ENCODE measurements at regions of chr18 and their contacts with region 1.

Region 1: DNA sequence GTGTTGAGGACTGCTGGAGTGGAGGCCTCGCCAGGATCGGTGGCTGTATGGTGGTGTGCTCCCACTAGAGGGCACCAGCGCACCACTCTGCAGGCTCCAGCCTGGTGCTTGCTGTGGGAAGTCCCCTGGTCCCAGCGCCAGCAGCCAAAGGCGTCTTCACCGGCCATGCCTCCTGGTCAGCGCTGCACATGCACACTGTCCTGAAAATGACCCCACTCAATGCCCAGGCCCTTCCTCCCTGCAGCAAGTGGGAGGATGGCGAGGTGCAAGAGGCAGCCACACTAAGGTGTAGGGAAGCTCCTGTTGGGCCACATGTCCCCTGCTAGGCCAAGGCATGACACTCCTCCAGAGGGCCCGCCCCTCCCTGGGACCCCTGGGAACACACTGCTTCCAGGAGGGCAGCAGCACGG is 136.5 kb downstream of the CTIF start:
- DNase-seq: peak; percentile 78
- ATAC-seq: peak; percentile 98
- H3K4me3 Mint-ChIP-seq: no peak overlapping the region
- H3K27ac Mint-ChIP-seq: no peak overlapping the region
- H3K4me1 Mint-ChIP-seq: peaks cover 3% of the 10 kb centered on the region
- H3K27me3 Mint-ChIP-seq: no peaks in the 10 kb centered on the region
- CTCF ChIP-seq: no peak

Region 2: DNA sequence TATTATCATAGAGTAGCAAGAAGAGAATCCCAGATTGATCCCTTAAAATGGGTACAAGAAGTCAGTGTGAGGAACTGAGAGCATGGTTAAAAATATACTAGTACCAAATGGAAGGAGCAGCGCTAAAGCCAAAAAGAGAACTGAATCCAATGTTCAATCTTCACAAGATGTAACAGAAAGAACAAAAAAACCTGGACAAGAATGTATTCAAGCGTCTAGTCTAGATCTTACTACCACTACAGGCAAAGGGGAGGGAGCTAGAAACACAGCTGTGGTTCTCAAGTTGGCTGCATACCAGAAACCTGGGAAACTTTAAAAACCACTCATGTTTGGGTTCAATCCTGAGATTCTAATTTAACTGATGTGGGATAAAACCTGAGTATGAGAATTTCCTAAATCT is 1815.5 kb before region 1 on chr18:
- CTCF ChIA-PET with region 1: no interaction called
- POLR2A ChIA-PET with region 1: no interaction called
- intact Hi-C with region 1: no loop called
- DNase-seq: no peak
- ATAC-seq: peak; percentile 21
- H3K4me3 Mint-ChIP-seq: peak overlapping the region; percentile 46
- H3K27ac Mint-ChIP-seq: peak overlapping the region; percentile 38
- H3K4me1 Mint-ChIP-seq: peaks cover 26% of the 10 kb centered on the region
- H3K27me3 Mint-ChIP-seq: no peaks in the 10 kb centered on the region
- CTCF ChIP-seq: no peak

Region 3: DNA sequence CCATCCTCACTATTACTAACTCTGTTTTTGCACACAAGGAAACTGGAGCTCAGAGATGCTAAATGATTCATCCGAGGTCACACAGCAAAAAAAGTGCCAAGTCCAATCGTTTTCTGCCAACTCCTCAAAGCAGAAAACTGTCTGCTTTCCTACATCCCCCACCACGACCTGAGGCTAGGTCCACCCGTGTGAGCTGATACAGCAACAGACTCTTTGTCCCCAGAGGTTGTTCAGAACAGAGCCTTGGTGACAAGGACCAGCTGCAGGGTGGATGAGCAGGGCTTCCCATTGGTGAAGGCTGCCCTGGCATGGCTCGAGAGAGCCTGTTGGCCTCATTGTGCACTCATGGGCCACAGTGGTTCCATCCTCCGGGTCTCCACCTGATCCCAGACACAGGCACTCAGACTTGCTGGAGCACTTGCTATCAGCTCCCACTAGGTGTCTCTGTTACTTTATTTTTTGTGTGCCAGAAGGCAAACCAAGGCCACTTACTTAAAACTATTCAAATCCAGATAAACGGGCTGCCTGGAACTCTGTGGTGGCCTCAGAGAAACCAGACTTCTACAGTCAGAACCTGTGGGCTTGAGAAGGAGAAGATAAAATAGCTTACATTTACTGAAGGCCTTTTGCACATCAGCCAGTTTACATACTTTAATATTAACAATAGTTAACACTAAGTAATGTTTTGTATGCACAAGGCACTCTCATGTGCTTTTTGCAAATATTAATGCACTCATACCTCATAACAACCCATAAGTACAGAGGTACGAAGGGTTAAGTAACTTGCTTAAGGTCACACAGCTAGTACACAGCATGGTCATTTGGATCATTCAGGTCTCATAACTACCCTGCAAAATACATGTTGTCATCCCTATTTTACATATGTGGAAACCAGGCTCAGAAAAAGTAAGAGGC is 199.5 kb before region 1 on chr18:
- CTCF ChIA-PET with region 1: no interaction called
- POLR2A ChIA-PET with region 1: no interaction called
- intact Hi-C with region 1: loop called (anchors 1 kb)
- DNase-seq: no peak
- ATAC-seq: peak; percentile 37
- H3K4me3 Mint-ChIP-seq: no peak overlapping the region
- H3K27ac Mint-ChIP-seq: no peak overlapping the region
- H3K4me1 Mint-ChIP-seq: no peaks in the 10 kb centered on the region
- H3K27me3 Mint-ChIP-seq: peaks cover 23% of the 10 kb centered on the region
- CTCF ChIP-seq: peak; percentile 30

Region 4: DNA sequence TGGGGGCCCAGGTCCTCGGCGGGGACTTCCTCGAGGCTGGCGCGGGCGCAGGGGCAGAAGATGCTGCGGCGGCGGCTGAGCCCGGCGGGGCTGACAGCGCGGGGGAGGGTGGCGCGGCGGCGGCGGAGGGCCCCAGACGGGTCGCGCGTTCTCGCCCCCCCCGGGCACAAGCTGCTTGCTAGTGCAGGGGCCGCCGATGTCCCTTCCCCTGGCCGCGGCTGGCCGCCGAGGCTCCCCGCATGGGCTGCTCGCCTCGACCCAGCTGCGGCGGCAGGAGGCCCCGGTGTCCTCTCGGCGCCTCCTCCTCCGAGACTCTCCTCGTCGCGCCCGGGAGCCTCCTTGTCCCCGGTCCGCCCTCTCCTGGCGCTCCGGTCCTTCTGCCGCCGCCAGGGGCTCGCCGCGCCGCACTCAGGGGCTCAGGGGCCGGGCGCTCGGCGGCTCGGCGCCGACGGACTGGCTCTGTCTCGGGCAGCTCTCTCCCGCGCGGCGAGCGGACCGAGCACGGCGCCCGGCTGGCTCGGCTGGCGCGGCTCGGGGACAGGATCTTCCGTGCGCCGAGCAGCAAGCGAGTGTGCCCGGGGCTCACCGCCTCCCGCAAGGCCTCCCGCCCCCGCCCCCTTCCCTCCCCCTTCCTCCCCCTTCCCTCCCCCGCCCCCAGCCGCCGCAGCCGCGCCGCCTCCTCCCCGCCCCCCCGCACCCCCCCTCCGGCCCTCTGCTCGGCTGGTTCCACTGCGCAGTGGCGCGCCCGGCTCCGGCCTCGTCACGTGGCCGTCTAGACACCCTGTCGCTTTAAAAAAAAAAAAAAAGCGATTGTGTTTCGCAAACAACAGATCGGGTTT is 276.3 kb after region 1 on chr18:
- CTCF ChIA-PET with region 1: no interaction called
- POLR2A ChIA-PET with region 1: no interaction called
- intact Hi-C with region 1: loop called (anchors 2 kb)
- DNase-seq: peak; percentile 77
- ATAC-seq: peak; percentile 46
- H3K4me3 Mint-ChIP-seq: peak overlapping the region; percentile 95
- H3K27ac Mint-ChIP-seq: peak overlapping the region; percentile 98
- H3K4me1 Mint-ChIP-seq: peaks cover 32% of the 10 kb centered on the region
- H3K27me3 Mint-ChIP-seq: no peaks in the 10 kb centered on the region
- CTCF ChIP-seq: no peak

Region 5: GRCh38 chr18:49178736-49179135 is 503.4 kb after region 1 on chr18:
- CTCF ChIA-PET with region 1: interaction called, 18 read pairs
- POLR2A ChIA-PET with region 1: no interaction called
- intact Hi-C with region 1: loop called (anchors 1 kb)
- DNase-seq: no peak
- ATAC-seq: no peak
- H3K4me3 Mint-ChIP-seq: no peak overlapping the region
- H3K27ac Mint-ChIP-seq: no peak overlapping the region
- H3K4me1 Mint-ChIP-seq: peaks cover 30% of the 10 kb centered on the region
- H3K27me3 Mint-ChIP-seq: no peaks in the 10 kb centered on the region
- CTCF ChIP-seq: no peak

Region 6: DNA sequence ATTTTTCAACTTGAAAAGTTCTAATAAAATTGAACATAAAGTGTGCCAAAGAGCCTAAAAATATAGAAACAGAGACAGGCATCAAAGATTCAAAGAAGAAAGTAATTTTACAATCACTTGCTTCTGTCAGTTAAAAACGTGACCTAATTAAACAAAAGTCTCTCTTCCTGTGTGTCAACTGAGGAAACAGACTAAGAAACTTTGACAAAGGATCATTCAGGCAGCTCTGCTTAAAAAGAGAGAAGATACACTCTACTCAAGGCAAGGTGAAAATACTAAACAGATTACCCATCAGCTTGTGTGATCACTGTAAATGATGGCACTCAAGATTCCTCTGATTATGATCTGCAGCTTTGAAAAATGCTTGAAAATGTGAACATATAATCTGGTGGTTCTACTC is 737.3 kb after region 1 on chr18:
- CTCF ChIA-PET with region 1: no interaction called
- POLR2A ChIA-PET with region 1: no interaction called
- intact Hi-C with region 1: loop called (anchors 1 kb)
- DNase-seq: no peak
- ATAC-seq: no peak
- H3K4me3 Mint-ChIP-seq: no peak overlapping the region
- H3K27ac Mint-ChIP-seq: no peak overlapping the region
- H3K4me1 Mint-ChIP-seq: peaks cover 11% of the 10 kb centered on the region
- H3K27me3 Mint-ChIP-seq: no peaks in the 10 kb centered on the region
- CTCF ChIP-seq: no peak

Region 7: GRCh38 chr18:49510393-49511115 is 835.2 kb after region 1 on chr18:
- CTCF ChIA-PET with region 1: no interaction called
- POLR2A ChIA-PET with region 1: no interaction called
- intact Hi-C with region 1: loop called (anchors 1 kb)
- DNase-seq: peak; percentile 32
- ATAC-seq: peak; percentile 67
- H3K4me3 Mint-ChIP-seq: no peak overlapping the region
- H3K27ac Mint-ChIP-seq: no peak overlapping the region
- H3K4me1 Mint-ChIP-seq: no peaks in the 10 kb centered on the region
- H3K27me3 Mint-ChIP-seq: peaks cover 18% of the 10 kb centered on the region
- CTCF ChIP-seq: no peak

Region 8: DNA sequence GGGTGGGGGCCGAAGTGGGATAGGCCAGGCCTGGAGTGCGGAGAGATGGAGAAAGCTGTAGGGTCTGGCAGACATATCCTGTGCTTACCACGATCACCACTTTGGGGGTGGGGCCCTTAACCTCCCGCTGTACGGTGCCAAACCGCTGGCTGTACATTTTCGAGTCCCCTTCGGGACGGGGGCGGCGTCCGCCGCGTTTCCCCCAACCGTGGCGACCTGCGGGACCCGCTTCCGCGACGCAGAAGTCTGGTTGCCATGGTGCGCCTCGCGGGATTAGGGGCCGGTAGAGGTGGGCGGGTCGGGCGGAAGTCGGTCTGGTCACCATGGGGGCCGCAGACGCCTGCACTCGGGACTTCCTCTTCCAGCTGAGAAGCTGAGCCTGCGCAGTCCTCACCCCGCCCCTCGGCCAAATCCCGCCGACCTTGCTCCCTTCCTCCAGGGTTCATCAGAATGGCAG is 1590.9 kb after region 1 on chr18 and contains the start of gene CFAP53:
- CTCF ChIA-PET with region 1: no interaction called
- POLR2A ChIA-PET with region 1: no interaction called
- intact Hi-C with region 1: loop called (anchors 1 kb)
- DNase-seq: peak; percentile 91
- ATAC-seq: peak; percentile 80
- H3K4me3 Mint-ChIP-seq: peak within 1 kb of the TSS; percentile 89
- H3K27ac Mint-ChIP-seq: peak within 1 kb of the TSS; percentile 88
- H3K4me1 Mint-ChIP-seq: peaks cover 28% of the 10 kb centered on the region
- H3K27me3 Mint-ChIP-seq: no peaks in the 10 kb centered on the region
- CTCF ChIP-seq: no peak
- total RNA-seq, gene CFAP53: 0.27 and 0.29 TPM in 2 replicates

Measured in activated B cell treated with CpG ODN at 0.5 μM for 24 hours (primary cell).